CD8-positive, alpha-beta T cell (primary cell): ENCODE measurements at regions of chrX and their contacts with region 1.

Region 1: DNA sequence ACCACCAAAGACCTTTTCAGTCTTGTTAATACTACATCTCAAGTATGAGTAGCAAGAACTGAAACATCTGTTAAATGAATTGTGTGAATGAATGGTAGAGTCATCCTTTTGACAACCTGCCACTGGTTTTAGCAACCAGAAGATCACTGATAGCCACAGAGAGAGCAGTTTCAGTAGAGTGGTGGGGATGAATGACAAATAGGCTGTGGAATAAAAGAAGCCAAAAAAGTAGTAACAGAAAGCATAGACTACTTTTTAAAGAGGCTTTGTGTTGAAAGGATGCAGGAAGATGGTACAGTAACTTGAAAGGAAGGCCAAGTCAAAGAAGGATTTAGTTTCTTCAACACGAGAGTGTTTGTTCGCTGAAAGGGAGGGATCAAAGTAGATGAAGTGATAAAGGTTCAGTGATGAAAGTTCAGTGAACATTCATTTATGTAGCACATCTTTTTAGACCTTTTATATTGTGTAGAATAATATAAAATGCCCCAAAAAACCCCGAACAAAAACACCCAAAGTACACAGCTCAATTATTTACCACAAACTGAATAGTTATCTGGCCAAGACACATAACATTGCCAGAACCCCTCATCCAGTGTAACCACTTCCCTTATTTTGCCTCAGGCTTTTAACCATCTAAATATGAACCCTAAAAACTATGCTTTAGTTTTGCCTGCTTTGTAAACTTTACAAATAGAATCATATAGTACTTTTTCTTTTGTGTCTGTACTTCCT is 40.1 kb upstream of the EIF1AX start:
- DNase-seq: peak in 1 of 9 experiments; percentile 3
- ATAC-seq: no peak
- H3K4me3 ChIP-seq: no peak overlapping the region
- H3K4me3 Mint-ChIP-seq: no peak overlapping the region
- H3K27ac ChIP-seq: no peak overlapping the region
- H3K27ac Mint-ChIP-seq: peak overlapping the region; percentile 88
- H3K4me1 ChIP-seq: peaks cover 7% of the 10 kb centered on the region
- H3K4me1 Mint-ChIP-seq: peaks cover 25% of the 10 kb centered on the region
- H3K27me3 ChIP-seq: no peaks in the 10 kb centered on the region
- H3K27me3 Mint-ChIP-seq: no peaks in the 10 kb centered on the region
- CTCF ChIP-seq: no peak

Region 2: GRCh38 chrX:20197641-20198210 is 16.0 kb after region 1 on chrX:
- CTCF ChIA-PET with region 1: no interaction called
- POLR2A ChIA-PET with region 1: no interaction called
- intact Hi-C with region 1: loop called in 1 of 2 experiments (anchors 2 kb)
- DNase-seq: no peak
- ATAC-seq: no peak
- H3K4me3 ChIP-seq: no peak overlapping the region
- H3K4me3 Mint-ChIP-seq: no peak overlapping the region
- H3K27ac ChIP-seq: no peak overlapping the region
- H3K27ac Mint-ChIP-seq: peak overlapping the region; percentile 87
- H3K4me1 ChIP-seq: no peaks in the 10 kb centered on the region
- H3K4me1 Mint-ChIP-seq: peaks cover 25% of the 10 kb centered on the region
- H3K27me3 ChIP-seq: no peaks in the 10 kb centered on the region
- H3K27me3 Mint-ChIP-seq: no peaks in the 10 kb centered on the region
- CTCF ChIP-seq: no peak